A549 (cell line): ENCODE measurements at regions of chr18 and their contacts with region 1.

Region 1: GRCh38 chr18:48475635-48476549 is 62.9 kb upstream of the CTIF start:
- DNase-seq: peak; percentile 66 to 70
- ATAC-seq: peak; percentile 90 to 99
- H3K4me3 ChIP-seq: no peak overlapping the region
- H3K27ac ChIP-seq: peak overlapping the region; percentile 58 to 60
- H3K4me1 ChIP-seq: peaks cover 8% of the 10 kb centered on the region
- CTCF ChIP-seq: peak; percentile 78
- EP300 ChIP-seq: no peak
- POLR2A ChIP-seq: no peak
- RAD21 ChIP-seq: peak; percentile 93 to 94

Region 2: GRCh38 chr18:48488388-48488850 is 12.5 kb after region 1 on chr18:
- CTCF ChIA-PET with region 1: interaction called, 40 read pairs
- POLR2A ChIA-PET with region 1: no interaction called
- DNase-seq: peak; percentile 50 to 81
- ATAC-seq: peak; percentile 96 to 98
- H3K4me3 ChIP-seq: no peak overlapping the region
- H3K27ac ChIP-seq: peak overlapping the region; percentile 75 to 87
- H3K4me1 ChIP-seq: peaks cover 42% of the 10 kb centered on the region
- CTCF ChIP-seq: no peak
- EP300 ChIP-seq: peak in 1 of 2 experiments; percentile 29; a peak in 2 of 5 replicates
- POLR2A ChIP-seq: no peak
- RAD21 ChIP-seq: no peak

Region 3: DNA sequence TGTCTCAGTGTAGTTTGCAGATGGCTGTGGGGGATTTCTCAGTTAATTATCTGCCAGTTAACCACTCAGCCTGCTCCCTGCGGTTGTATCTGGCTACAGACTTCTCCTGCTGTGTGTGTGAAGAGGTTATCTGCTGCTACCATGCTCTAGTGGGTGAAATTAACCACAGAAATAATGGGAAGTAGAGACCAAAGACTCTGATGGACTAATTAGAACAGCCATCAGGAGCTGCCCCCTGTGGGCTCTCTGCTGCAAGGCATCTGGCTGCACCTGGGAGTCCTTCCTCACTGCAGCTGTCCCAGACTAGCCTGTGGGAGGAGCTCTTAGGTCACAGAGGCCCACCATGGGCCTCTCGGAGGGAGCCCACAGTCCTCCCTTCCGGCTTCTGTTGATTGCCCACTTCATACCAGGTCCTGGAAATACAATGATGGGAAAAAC is 129.5 kb after region 1 on chr18:
- CTCF ChIA-PET with region 1: interaction called, 16 read pairs
- POLR2A ChIA-PET with region 1: no interaction called
- DNase-seq: peak in 1 of 2 experiments; percentile 49
- ATAC-seq: peak; percentile 85 to 94; a peak in 5 of 6 replicates
- H3K4me3 ChIP-seq: no peak overlapping the region
- H3K27ac ChIP-seq: peak overlapping the region in 1 of 2 experiments; percentile 25; a peak in 1 of 6 replicates
- H3K4me1 ChIP-seq: peaks cover 7% of the 10 kb centered on the region; the same call in 1 of the 3 replicates
- CTCF ChIP-seq: peak; percentile 42
- EP300 ChIP-seq: no peak
- POLR2A ChIP-seq: no peak
- RAD21 ChIP-seq: peak; percentile 56 to 59

Region 4: DNA sequence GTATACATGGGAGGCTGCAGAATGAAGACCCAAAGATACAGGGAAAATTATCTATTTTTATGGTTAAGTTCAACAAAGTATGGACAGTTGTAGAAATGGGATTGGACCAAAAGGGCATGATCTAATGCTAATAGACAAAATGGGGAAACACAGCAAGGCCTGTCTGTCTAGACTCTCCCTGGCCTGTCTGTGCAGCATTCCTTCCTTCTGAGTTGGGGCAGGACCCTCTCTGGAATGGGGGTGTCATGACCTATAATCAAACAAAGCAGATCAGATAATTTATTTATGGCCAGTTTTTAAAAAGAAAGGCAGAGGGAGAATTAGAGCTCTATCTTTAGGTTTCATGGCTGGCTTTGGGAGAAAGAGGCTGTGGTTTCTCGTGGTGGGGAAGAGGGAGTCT is 167.4 kb after region 1 on chr18:
- CTCF ChIA-PET with region 1: interaction called, 13 read pairs
- POLR2A ChIA-PET with region 1: no interaction called
- DNase-seq: no peak
- ATAC-seq: no peak
- H3K4me3 ChIP-seq: no peak overlapping the region
- H3K27ac ChIP-seq: no peak overlapping the region
- H3K4me1 ChIP-seq: no peaks in the 10 kb centered on the region
- CTCF ChIP-seq: no peak
- EP300 ChIP-seq: no peak
- POLR2A ChIP-seq: no peak
- RAD21 ChIP-seq: no peak

Region 5: GRCh38 chr18:48675352-48675761 is 199.5 kb after region 1 on chr18:
- CTCF ChIA-PET with region 1: interaction called, 22 read pairs
- POLR2A ChIA-PET with region 1: no interaction called
- DNase-seq: peak; percentile 64 to 81
- ATAC-seq: peak; percentile 95 to 97
- H3K4me3 ChIP-seq: no peak overlapping the region
- H3K27ac ChIP-seq: peak overlapping the region; percentile 38 to 63; a peak in 5 of 6 replicates
- H3K4me1 ChIP-seq: peaks cover 18% of the 10 kb centered on the region
- CTCF ChIP-seq: peak; percentile 68
- EP300 ChIP-seq: no peak
- POLR2A ChIP-seq: no peak
- RAD21 ChIP-seq: peak; percentile 85 to 87

Region 6: GRCh38 chr18:48728204-48728833 is 252.4 kb after region 1 on chr18:
- CTCF ChIA-PET with region 1: no interaction called
- POLR2A ChIA-PET with region 1: no interaction called
- DNase-seq: no peak
- ATAC-seq: no peak
- H3K4me3 ChIP-seq: no peak overlapping the region
- H3K27ac ChIP-seq: no peak overlapping the region
- H3K4me1 ChIP-seq: no peaks in the 10 kb centered on the region
- CTCF ChIP-seq: no peak
- EP300 ChIP-seq: no peak
- POLR2A ChIP-seq: no peak
- RAD21 ChIP-seq: no peak